ENCODE measurements at regions of chr1 and their contacts with region 1.

Region 1: GRCh38 chr1:180188091-180188506 is 33.4 kb downstream of the QSOX1 start:
- DNase-seq: peak; percentile 45 to 55
- H3K4me3 ChIP-seq: no peak overlapping the region
- H3K27ac ChIP-seq: no peak overlapping the region
- H3K4me1 ChIP-seq: no peaks in the 10 kb centered on the region
- H3K27me3 ChIP-seq: no peaks in the 10 kb centered on the region
- CTCF ChIP-seq: peak; percentile 84

Region 2: DNA sequence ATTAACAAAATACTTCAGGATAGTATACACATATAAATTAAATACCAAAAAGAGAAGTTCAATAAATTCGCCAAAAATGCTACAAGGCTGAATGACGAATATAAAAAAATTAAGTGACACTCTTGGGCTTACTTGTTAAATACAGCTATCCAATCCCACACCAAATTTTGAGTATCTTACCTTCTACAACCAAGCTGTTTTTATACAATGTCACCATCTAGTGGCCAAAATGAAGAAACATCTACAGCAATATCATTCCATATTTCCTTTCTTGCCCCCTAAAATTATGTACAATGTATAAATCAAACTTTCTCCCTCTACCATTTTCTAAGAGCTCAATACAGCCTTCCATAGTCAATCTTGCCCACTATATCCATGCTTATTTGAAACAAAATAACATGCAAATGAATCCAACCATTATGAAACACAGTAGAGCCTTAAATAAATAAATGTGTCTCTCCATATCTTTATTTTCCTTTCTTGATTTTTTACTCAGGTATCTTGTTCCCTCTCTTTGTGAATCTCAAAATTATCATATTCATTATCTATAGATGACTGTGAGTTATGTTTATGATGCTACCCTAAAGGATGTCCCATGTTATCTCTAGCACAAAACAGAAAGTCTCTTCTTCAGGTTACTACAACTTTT is 228.0 kb after region 1 on chr1:
- CTCF ChIA-PET with region 1: interaction called, 6 read pairs
- POLR2A ChIA-PET with region 1: no interaction called
- intact Hi-C with region 1: loop called (anchors 1 kb)
- DNase-seq: no peak
- H3K4me3 ChIP-seq: no peak overlapping the region
- H3K27ac ChIP-seq: no peak overlapping the region
- H3K4me1 ChIP-seq: no peaks in the 10 kb centered on the region
- H3K27me3 ChIP-seq: no peaks in the 10 kb centered on the region
- CTCF ChIP-seq: peak; percentile 82

Region 3: GRCh38 chr1:180482425-180483275 is 294.6 kb after region 1 on chr1:
- CTCF ChIA-PET with region 1: no interaction called
- POLR2A ChIA-PET with region 1: no interaction called
- intact Hi-C with region 1: loop called (anchors 2 kb)
- DNase-seq: peak in 1 of 2 experiments; percentile 45
- H3K4me3 ChIP-seq: no peak overlapping the region
- H3K27ac ChIP-seq: no peak overlapping the region
- H3K4me1 ChIP-seq: no peaks in the 10 kb centered on the region
- H3K27me3 ChIP-seq: no peaks in the 10 kb centered on the region
- CTCF ChIP-seq: peak; percentile 83

Measured in PC-9 (cell line).